Spleen (tissue), 13 donors: ENCODE measurements at regions of chr16 and their contacts with region 1.

Region 1: DNA sequence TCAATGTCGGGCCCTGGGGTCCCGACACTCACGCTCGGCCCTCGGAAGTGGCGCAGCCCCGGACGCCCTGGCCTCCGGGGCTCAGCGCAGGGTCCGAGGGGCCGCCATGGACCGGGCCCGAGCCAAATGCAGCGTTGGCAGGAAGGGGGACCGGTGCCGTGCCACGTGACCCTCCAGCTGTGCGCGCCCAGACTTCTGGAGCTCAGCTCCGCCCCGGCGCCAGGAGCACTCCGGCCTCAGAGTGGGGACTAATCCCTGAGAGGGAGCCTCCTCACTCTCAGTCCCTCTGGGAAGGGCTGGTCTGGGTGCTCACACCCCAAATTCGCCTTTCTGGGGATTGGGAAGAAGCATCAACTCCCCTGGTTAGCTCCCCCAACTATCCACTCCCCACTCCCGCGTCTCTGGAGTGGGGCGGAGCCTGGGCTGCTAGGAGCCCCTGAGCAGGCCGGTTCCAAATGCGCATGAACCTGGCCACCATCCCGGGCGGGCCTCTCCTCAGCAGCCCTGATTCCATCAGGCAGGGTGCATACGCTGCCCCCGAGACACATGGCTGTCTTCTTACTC is at the start of gene B3GNT9:
- DNase-seq: peak; percentile 86
- H3K4me3 ChIP-seq: peak within 1 kb of the TSS; percentile 38 to 73 (median 49)
- H3K27ac ChIP-seq: peak within 1 kb of the TSS; percentile 57 to 85 (median 80)
- H3K4me1 ChIP-seq: peaks cover 17 to 53% (median 37%) of the 10 kb centered on the region in 6 donors
- H3K27me3 ChIP-seq: peaks cover 0 to 46% (median 23%) of the 10 kb centered on the region in 7 donors
- CTCF ChIP-seq: no peak
- POLR2A ChIP-seq: no peak
- total RNA-seq, gene B3GNT9: 6.1 to 15.3 (median 10.1) TPM

Region 2: GRCh38 chr16:66977341-66978113 is 173.4 kb before region 1 on chr16:
- intact Hi-C with region 1: loop called (anchors 5 kb)
- DNase-seq: peak; percentile 97
- H3K4me3 ChIP-seq: no peak overlapping the region
- H3K27ac ChIP-seq: no peak overlapping the region
- H3K4me1 ChIP-seq: peaks cover 0 to 27% (median 7%) of the 10 kb centered on the region in 6 donors
- H3K27me3 ChIP-seq: peaks cover 0 to 10% (median 0%) of the 10 kb centered on the region in 7 donors
- CTCF ChIP-seq: peak; percentile 95 to 99 (median 97)
- POLR2A ChIP-seq: no peak

Region 3: GRCh38 chr16:67068212-67068753 is 82.6 kb before region 1 on chr16:
- intact Hi-C with region 1: no loop called
- DNase-seq: no peak
- H3K4me3 ChIP-seq: no peak overlapping the region
- H3K27ac ChIP-seq: no peak overlapping the region
- H3K4me1 ChIP-seq: peaks cover 0 to 15% (median 4%) of the 10 kb centered on the region in 6 donors
- H3K27me3 ChIP-seq: no peaks in the 10 kb centered on the region
- CTCF ChIP-seq: no peak
- POLR2A ChIP-seq: no peak

Region 4: GRCh38 chr16:67207857-67208519 is 57.1 kb after region 1 on chr16:
- intact Hi-C with region 1: no loop called
- DNase-seq: no peak
- H3K4me3 ChIP-seq: no peak overlapping the region
- H3K27ac ChIP-seq: no peak overlapping the region
- H3K4me1 ChIP-seq: peaks cover 0 to 16% (median 1%) of the 10 kb centered on the region in 6 donors
- H3K27me3 ChIP-seq: no peaks in the 10 kb centered on the region
- CTCF ChIP-seq: no peak
- POLR2A ChIP-seq: no peak